IMR-90 (cell line): ENCODE measurements at regions of chr17 and their contacts with region 1.

Region 1: DNA sequence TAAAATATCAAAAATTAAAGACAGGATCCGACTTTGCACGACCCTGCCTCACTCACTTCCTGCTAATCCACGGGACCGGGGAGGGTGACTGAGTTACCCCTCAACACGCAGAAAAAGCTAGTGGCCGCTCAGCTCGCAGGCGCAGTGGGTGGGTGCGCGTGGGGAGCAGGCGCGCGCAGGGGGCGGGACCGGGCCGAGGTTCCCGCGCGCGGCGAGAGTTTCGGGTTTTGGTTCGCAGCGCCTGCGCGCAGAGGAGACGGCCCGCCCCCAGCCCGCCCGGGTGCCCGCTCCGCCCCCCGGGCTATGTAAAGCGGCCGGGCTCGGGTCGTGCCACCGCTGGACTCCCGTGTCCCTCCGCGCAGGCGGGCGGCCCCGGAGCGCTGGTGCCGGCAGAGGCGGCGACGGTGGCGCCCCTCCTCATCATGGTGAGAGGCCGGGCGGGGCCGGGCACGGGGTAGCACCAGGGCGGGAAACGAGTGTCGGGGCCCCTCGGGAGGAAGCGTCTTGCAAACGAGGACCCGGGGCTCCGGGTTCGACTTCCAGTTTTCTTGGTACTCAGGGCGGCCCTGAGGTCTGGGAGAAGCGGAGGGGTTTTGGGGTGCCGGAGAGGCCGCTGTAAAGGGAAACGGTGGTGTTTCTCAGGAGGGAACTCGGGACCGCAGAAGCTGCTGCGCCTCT is at the start of gene CNP:
- DNase-seq: peak; percentile 87
- ATAC-seq: peak; percentile 91
- H3K4me3 ChIP-seq: peak within 1 kb of the TSS; percentile 94
- H3K27ac ChIP-seq: peak within 1 kb of the TSS; percentile 81
- H3K4me1 ChIP-seq: peaks cover 11% of the 10 kb centered on the region
- H3K27me3 ChIP-seq: no peaks in the 10 kb centered on the region
- CTCF ChIP-seq: no peak
- POLR2A ChIP-seq: peak; percentile 89
- RAD21 ChIP-seq: no peak
- total RNA-seq, gene CNP: 45.5 and 50.3 TPM in 2 replicates

Region 2: GRCh38 chr17:41849251-41849990 is 117.2 kb before region 1 on chr17:
- CTCF ChIA-PET with region 1: no interaction called
- POLR2A ChIA-PET with region 1: interaction called, 19 read pairs
- dilution Hi-C with region 1: no loop called
- in situ Hi-C with region 1: no loop called
- intact Hi-C with region 1: no loop called
- DNase-seq: no peak
- ATAC-seq: peak; percentile 29; the same call in 1 of the 2 replicates
- H3K4me3 ChIP-seq: no peak overlapping the region
- H3K27ac ChIP-seq: no peak overlapping the region
- H3K4me1 ChIP-seq: 0 out of 2 replicates have a peak, but pooled peaks cover 2% of the 10 kb centered on the region
- H3K27me3 ChIP-seq: no peaks in the 10 kb centered on the region
- CTCF ChIP-seq: no peak
- POLR2A ChIP-seq: no peak
- RAD21 ChIP-seq: no peak

Region 3: GRCh38 chr17:42112552-42113176 is 146.1 kb after region 1 on chr17 and contains the start of gene DHX58:
- CTCF ChIA-PET with region 1: interaction called, 3 read pairs
- POLR2A ChIA-PET with region 1: no interaction called
- dilution Hi-C with region 1: no loop called
- in situ Hi-C with region 1: loop called (anchors 5 kb)
- intact Hi-C with region 1: loop called (anchors 1 kb)
- DNase-seq: peak; percentile 80
- ATAC-seq: peak; percentile 83
- H3K4me3 ChIP-seq: peak within 1 kb of the TSS; percentile 37
- H3K27ac ChIP-seq: peak within 1 kb of the TSS; percentile 53
- H3K4me1 ChIP-seq: peaks cover 4% of the 10 kb centered on the region; the same call in 1 of the 2 replicates
- H3K27me3 ChIP-seq: no peaks in the 10 kb centered on the region
- CTCF ChIP-seq: no peak
- POLR2A ChIP-seq: no peak
- RAD21 ChIP-seq: no peak
- total RNA-seq, gene DHX58: 1.1 and 1.4 TPM in 2 replicates

Region 4: GRCh38 chr17:42456223-42457131 is 489.9 kb after region 1 on chr17:
- CTCF ChIA-PET with region 1: no interaction called
- POLR2A ChIA-PET with region 1: no interaction called
- dilution Hi-C with region 1: no loop called
- in situ Hi-C with region 1: no loop called
- intact Hi-C with region 1: no loop called
- DNase-seq: peak; percentile 83
- ATAC-seq: no peak
- H3K4me3 ChIP-seq: no peak overlapping the region; the same call in 1 of the 2 replicates
- H3K27ac ChIP-seq: peak overlapping the region; percentile 37; the same call in 1 of the 2 replicates
- H3K4me1 ChIP-seq: peaks cover 10% of the 10 kb centered on the region
- H3K27me3 ChIP-seq: no peaks in the 10 kb centered on the region
- CTCF ChIP-seq: no peak
- POLR2A ChIP-seq: no peak
- RAD21 ChIP-seq: no peak